AG04450 (cell line): ENCODE measurements at regions of chr7 and their contacts with region 1.

Region 1: GRCh38 chr7:135274495-135275268 is 41.0 kb downstream of the STRA8 start:
- DNase-seq: peak; percentile 48
- H3K4me3 ChIP-seq: no peak overlapping the region
- H3K27ac ChIP-seq: no peak overlapping the region
- H3K27me3 ChIP-seq: peaks cover 10% of the 10 kb centered on the region
- CTCF ChIP-seq: peak; percentile 81

Region 2: DNA sequence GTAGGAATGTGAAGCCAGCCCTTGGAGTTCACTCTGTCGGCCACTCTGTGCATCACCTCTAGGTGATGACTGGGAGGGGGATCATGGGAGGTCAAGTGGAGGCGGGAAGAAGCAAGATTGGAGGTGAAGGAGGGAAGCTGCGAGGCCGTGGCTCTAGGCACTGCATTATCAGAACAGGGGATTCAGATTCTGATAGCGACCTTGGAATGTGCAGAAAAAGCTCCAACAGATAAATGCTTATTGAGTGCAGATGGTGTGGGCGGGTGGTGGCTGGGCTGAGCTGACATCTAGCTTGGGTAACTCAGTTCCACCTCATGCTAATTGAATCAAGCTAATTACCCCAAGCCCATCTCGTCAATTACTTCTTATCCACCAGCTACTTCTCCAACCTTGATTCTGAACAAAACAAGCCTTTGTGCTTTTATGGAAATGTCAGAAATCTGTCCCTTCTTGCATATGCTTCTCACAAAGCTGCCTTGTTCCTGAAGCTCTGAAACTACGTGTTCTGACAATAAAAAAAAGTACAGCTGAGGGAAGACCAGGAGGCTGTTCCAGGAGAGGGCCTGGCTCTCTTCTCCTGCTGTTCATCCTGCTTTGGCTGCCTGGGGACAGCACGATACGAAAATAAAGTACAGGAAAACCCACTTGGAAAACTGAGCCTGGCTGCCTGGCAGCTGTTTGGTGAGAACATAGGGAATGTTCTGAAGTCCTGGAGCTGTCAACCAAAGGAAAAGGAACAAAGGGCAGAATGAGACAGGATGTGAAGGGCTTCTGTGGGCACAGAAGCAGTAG is 13.6 kb before region 1 on chr7:
- CTCF ChIA-PET with region 1: interaction called, 30 read pairs
- POLR2A ChIA-PET with region 1: no interaction called
- DNase-seq: no peak
- H3K4me3 ChIP-seq: no peak overlapping the region
- H3K27ac ChIP-seq: no peak overlapping the region
- H3K27me3 ChIP-seq: peaks cover 8% of the 10 kb centered on the region
- CTCF ChIP-seq: no peak

Region 3: DNA sequence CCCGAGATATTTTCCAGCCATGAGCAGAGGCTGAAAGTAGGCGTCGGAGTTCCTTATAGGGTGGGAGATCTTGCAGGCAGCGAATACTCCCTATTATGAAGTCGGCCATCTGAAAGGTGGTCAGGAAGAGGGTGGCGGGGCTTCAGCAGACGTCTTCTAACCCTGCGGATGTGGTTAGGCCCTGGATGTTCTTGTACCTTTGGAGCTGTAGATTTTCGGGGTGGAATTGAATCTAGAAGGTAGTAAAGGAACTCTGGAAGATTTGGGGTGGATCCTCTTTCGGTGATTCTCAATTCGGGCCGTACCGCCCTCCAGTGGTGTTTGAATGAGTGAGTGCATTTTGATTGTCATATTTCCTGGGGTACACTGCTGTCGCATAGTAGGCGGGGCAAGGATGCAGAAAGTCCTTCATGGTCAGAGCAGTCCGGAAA is 283.7 kb after region 1 on chr7:
- CTCF ChIA-PET with region 1: interaction called, 55 read pairs
- POLR2A ChIA-PET with region 1: no interaction called
- DNase-seq: peak; percentile 1
- H3K4me3 ChIP-seq: peak overlapping the region; percentile 75
- H3K27ac ChIP-seq: peak overlapping the region; percentile 92
- H3K27me3 ChIP-seq: peaks cover 2% of the 10 kb centered on the region
- CTCF ChIP-seq: peak; percentile 69

Region 4: DNA sequence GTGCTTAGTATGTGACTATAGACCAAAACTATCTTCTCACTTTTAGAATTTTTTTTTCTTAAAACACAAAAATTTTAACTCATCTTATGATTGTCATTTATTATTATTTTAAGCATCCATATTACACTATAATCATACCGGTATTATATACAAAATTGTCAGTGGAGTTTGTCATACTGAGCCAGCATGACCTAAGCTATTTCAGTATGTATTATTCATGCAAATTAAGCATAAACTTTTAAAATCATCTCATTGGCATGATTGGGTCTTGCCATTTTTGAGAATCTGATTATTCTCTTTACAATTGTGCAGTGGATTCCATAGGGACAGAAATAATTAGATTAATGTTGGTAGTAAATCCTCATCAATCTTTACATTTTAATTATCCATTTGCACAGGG is 341.5 kb after region 1 on chr7:
- CTCF ChIA-PET with region 1: interaction called, 13 read pairs
- POLR2A ChIA-PET with region 1: no interaction called
- DNase-seq: no peak
- H3K4me3 ChIP-seq: no peak overlapping the region
- H3K27ac ChIP-seq: no peak overlapping the region
- H3K27me3 ChIP-seq: no peaks in the 10 kb centered on the region
- CTCF ChIP-seq: no peak